ENCODE measurements at regions of chr22 and their contacts with region 1.

Region 1: DNA sequence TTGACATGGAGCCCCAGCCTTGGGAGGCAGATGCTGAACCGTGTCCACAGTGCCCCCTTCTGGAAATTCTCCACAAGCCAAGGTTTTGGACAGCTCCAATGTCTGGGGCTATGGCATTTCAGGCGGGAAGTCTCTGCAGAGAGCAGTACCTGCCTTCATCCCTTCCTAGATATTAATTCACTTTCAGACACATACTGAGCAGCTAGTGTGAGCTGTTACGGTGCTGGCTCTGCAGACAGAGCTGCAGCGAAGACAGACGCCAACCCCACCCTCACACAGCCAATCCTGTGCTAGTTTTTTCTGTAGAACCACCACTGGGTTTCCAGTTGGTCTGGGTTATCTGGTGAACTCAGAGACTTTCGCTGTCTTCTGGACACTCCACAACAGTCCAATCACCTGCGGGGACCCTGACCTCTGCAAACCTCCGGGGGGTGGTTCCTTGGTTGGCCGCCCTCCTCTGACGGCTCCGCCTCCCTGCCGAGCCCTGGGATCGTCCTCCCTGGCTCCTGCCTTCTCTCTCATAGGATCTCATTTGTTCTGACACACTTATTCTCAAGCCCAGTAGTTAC is 9.1 kb downstream of the LMF2 start:
- DNase-seq: no peak
- ATAC-seq: peak; percentile 96
- H3K4me3 ChIP-seq: no peak overlapping the region
- H3K27ac ChIP-seq: no peak overlapping the region
- H3K4me1 ChIP-seq: no peaks in the 10 kb centered on the region
- H3K27me3 ChIP-seq: no peaks in the 10 kb centered on the region
- CTCF ChIP-seq: peak; percentile 70 to 79 (median 71)
- EP300 ChIP-seq: no peak
- POLR2A ChIP-seq: no peak
- RAD21 ChIP-seq: peak; percentile 82

Region 2: GRCh38 chr22:50244420-50245213 is 253.8 kb before region 1 on chr22 and contains the start of gene TUBGCP6:
- CTCF ChIA-PET with region 1: interaction called, 16 read pairs
- POLR2A ChIA-PET with region 1: no interaction called
- RAD21 ChIA-PET with region 1: interaction called, 5 read pairs
- SMC1A ChIA-PET with region 1: interaction called, 8 read pairs
- in situ Hi-C with region 1: no loop called
- intact Hi-C with region 1: no loop called
- DNase-seq: peak; percentile 53
- ATAC-seq: peak; percentile 86
- H3K4me3 ChIP-seq: peak within 1 kb of the TSS; percentile 83
- H3K27ac ChIP-seq: peak within 1 kb of the TSS; percentile 71
- H3K4me1 ChIP-seq: peaks cover 20% of the 10 kb centered on the region
- H3K27me3 ChIP-seq: no peaks in the 10 kb centered on the region
- CTCF ChIP-seq: peak in 2 of 3 experiments; percentile 13 to 34; a peak in 3 of 6 replicates
- EP300 ChIP-seq: peak in 1 of 2 experiments; percentile 30; a peak in 1 of 4 replicates
- POLR2A ChIP-seq: peak; percentile 97
- RAD21 ChIP-seq: no peak
- polyA plus RNA-seq, gene TUBGCP6: 0.74 to 2.0 TPM

Region 3: GRCh38 chr22:50341977-50342650 is 156.3 kb before region 1 on chr22:
- CTCF ChIA-PET with region 1: interaction called, 10 read pairs
- POLR2A ChIA-PET with region 1: no interaction called
- RAD21 ChIA-PET with region 1: no interaction called
- SMC1A ChIA-PET with region 1: no interaction called
- in situ Hi-C with region 1: no loop called
- intact Hi-C with region 1: no loop called
- DNase-seq: no peak
- ATAC-seq: peak; percentile 88
- H3K4me3 ChIP-seq: peak overlapping the region; percentile 80
- H3K27ac ChIP-seq: peak overlapping the region; percentile 51; the same call in 1 of the 2 replicates
- H3K4me1 ChIP-seq: 0 out of 2 replicates have a peak, but pooled peaks cover 3% of the 10 kb centered on the region
- H3K27me3 ChIP-seq: no peaks in the 10 kb centered on the region
- CTCF ChIP-seq: peak; percentile 96 to 99 (median 96); a peak in 5 of 6 replicates
- EP300 ChIP-seq: no peak
- POLR2A ChIP-seq: no peak
- RAD21 ChIP-seq: peak; percentile 93

Region 4: GRCh38 chr22:50456466-50457234 is 41.8 kb before region 1 on chr22:
- CTCF ChIA-PET with region 1: interaction called, 8 read pairs
- POLR2A ChIA-PET with region 1: no interaction called
- RAD21 ChIA-PET with region 1: no interaction called
- SMC1A ChIA-PET with region 1: no interaction called
- in situ Hi-C with region 1: no loop called
- intact Hi-C with region 1: loop called (anchors 2 kb)
- DNase-seq: no peak
- ATAC-seq: peak; percentile 54
- H3K4me3 ChIP-seq: no peak overlapping the region
- H3K27ac ChIP-seq: no peak overlapping the region
- H3K4me1 ChIP-seq: no peaks in the 10 kb centered on the region
- H3K27me3 ChIP-seq: no peaks in the 10 kb centered on the region
- CTCF ChIP-seq: peak; percentile 25 to 34 (median 34); a peak in 4 of 6 replicates
- EP300 ChIP-seq: no peak
- POLR2A ChIP-seq: no peak; the same call in 1 of the 2 replicates
- RAD21 ChIP-seq: peak; percentile 32; the same call in 1 of the 2 replicates

Region 5: DNA sequence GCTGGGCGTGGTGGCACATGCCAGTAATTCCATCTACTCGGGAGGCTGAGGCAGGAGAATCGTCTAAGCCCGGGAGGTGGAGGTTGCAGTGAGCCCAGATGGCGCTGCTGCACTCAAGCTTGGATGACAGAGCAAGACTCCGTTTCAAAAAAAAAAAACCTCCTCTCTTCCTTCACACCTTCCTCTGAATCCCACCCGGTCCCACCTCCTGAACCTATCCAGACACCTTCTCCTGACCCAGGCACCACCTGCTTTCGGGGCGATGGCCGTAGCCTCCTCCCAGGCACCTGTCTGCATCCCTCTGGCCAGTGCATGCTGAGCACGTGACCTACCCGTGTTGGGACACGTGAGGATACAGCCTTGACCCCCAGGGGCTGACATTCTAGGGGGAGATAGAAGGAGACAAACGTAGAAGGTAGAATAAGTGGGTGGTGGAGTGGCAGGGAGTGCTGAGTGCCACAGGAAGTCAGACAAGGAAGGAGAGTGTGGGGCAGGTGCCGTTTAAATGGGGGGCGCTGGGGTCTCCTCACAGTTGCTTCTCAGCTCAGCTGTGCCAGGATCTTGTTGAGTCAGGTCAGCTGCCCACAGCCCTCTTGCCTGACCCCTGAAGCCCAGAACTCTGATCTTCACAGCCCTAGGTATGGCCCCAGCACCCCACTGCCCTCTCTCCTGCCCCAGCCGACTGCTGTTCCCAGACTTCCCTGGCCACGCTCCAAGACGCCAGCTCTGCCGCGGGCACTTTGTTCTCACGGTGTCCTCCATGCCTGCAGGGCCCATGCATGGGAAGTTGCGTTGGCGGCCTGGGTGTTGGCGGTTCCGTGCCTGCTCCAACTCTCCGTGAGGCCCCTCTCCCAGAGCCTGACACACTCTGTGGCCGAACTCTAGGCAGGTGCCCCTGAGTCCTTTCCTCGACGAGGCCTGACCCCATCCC is 12.9 kb before region 1 on chr22:
- CTCF ChIA-PET with region 1: interaction called, 29 read pairs
- POLR2A ChIA-PET with region 1: interaction called, 4 read pairs
- RAD21 ChIA-PET with region 1: interaction called, 5 read pairs
- SMC1A ChIA-PET with region 1: no interaction called
- in situ Hi-C with region 1: no loop called
- intact Hi-C with region 1: no loop called
- DNase-seq: no peak
- ATAC-seq: no peak
- H3K4me3 ChIP-seq: no peak overlapping the region
- H3K27ac ChIP-seq: no peak overlapping the region
- H3K4me1 ChIP-seq: no peaks in the 10 kb centered on the region
- H3K27me3 ChIP-seq: peaks cover 0 to 3% of the 10 kb centered on the region in 2 experiments; a peak in 2 of 4 replicates
- CTCF ChIP-seq: no peak
- EP300 ChIP-seq: no peak
- POLR2A ChIP-seq: no peak
- RAD21 ChIP-seq: no peak

Measured in GM12878 (cell line).